GM12878 (cell line): ENCODE measurements at regions of chr1 and their contacts with region 1.

Region 1: DNA sequence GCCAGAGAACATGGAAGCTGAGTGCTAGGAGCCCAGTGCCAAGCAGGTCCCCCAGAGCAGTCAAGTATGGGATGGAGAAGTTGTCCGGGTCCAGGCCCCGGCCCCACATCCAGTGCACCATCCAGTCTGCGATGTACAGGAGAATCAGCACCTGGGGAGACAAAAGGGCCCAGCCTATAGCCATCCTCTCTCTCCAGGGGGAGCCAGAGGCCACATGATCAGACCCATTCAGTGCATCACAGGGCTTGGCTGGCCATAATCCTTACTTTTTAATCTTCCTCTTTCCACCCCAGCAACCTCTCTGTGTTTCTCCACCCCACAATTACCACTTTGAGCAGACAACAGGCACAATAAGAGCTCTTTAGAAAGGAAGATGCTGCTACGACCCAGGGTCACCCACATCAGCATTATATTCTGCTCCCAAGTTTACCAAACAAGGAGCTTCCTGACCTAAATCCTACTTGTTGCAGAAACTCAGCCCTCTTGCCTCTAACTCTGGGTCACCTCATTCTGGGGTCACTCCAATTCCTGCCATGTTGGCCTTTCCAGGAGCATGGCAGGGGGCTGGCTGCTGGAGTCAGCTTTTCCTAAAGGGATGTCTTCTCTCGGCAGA is 16.4 kb upstream of the RAB29 start:
- DNase-seq: no peak
- ATAC-seq: peak; percentile 98
- H3K4me3 ChIP-seq: no peak overlapping the region
- H3K27ac ChIP-seq: no peak overlapping the region
- H3K4me1 ChIP-seq: peaks cover 7% of the 10 kb centered on the region
- H3K27me3 ChIP-seq: no peaks in the 10 kb centered on the region; a peak in 1 of 4 replicates
- CTCF ChIP-seq: peak; percentile 87 to 94 (median 91); a peak in 5 of 6 replicates
- EP300 ChIP-seq: no peak
- POLR2A ChIP-seq: no peak
- RAD21 ChIP-seq: peak; percentile 78

Region 2: DNA sequence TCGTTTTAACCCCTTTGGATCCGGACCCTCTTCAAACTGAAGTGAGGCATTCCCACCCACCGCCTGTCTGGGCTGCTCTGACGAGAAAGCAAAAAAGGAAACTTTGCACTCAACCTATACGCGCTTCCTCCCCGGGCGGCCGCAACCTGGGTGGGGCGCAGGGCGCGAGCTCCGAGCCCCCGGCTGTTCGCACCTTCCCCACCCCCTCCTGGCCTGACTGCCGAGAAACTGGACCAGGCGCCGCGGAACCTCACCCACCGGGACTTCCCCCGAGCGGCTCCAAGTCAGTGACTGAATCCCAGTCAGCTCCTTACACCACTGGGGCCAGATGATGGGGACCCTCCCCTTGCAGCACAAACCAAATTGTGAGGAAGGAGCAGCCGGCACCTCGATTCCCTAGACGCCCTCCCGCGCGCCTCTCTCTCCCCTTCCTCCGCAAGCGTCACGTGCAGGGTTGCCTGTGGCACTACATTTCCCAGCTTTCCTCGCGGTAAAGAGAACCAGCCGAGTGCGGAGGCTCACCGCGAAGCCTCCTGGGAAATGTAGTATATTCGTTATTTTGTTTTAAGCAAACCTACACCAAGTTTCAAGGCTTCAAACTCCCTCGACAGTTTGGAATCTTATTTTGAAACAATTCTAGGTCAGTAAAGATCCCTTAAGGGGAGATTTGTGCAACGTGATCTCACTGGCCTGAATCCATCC is 16.5 kb before region 1 on chr1 and contains the start of gene RAB29:
- CTCF ChIA-PET with region 1: interaction called, 12 read pairs
- POLR2A ChIA-PET with region 1: interaction called, 4 read pairs
- RAD21 ChIA-PET with region 1: interaction called, 3 read pairs
- SMC1A ChIA-PET with region 1: interaction called, 3 read pairs
- in situ Hi-C with region 1: no loop called
- intact Hi-C with region 1: no loop called
- DNase-seq: peak; percentile 57
- ATAC-seq: peak; percentile 83
- H3K4me3 ChIP-seq: peak within 1 kb of the TSS; percentile 88
- H3K27ac ChIP-seq: peak within 1 kb of the TSS; percentile 63
- H3K4me1 ChIP-seq: peaks cover 12% of the 10 kb centered on the region
- H3K27me3 ChIP-seq: no peaks in the 10 kb centered on the region
- CTCF ChIP-seq: no peak
- EP300 ChIP-seq: peak in 1 of 2 experiments; percentile 46; a peak in 1 of 4 replicates
- POLR2A ChIP-seq: peak; percentile 50; the same call in 1 of the 2 replicates
- RAD21 ChIP-seq: no peak
- polyA plus RNA-seq, gene RAB29: 12.6 to 16.2 TPM

Region 3: DNA sequence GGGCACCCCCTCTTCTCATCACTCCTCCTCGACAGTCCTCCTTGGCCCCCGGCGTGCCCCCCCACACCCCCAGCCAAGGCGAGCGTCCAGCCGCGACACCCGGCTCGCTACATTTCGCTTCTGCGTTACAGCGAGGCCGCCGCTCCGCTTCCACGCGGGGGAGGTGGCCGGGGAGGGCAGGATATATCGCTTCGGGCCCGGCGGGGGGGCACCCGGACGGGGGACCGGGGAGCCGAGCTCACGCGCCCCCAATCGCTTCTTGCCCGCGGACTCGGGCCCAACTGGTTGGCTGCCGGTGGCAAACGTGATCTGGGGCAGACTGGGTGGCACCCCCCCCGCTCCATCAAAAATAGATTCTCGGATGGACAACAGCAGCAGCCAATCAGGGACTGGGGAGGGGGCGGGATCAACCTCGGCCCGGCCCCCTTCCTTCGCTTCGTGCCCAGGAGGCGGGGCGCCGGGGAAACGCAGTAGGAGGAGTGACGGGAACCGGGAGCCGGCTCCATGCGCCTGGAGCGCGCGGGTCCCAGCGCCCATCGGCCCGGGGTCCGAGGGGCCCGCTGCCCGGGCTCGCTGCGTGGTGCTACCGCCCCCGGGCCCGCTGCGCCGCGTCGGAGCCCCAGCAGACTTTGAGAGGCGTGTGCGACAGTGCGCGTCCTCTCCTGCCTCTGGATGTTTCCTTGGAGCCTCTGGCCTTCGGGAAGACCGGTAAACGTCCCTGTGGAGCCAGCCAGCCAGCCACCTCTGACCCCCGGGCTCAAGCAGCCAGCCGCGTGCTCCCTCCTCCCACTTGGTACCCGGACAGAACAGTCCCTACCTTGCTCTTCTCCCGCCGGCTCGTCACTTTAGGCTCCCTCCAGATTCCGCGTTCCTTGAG is 21.4 kb after region 1 on chr1 and contains the start of gene SLC41A1:
- CTCF ChIA-PET with region 1: interaction called, 13 read pairs
- POLR2A ChIA-PET with region 1: no interaction called
- RAD21 ChIA-PET with region 1: interaction called, 3 read pairs
- SMC1A ChIA-PET with region 1: interaction called, 7 read pairs
- in situ Hi-C with region 1: no loop called
- intact Hi-C with region 1: no loop called
- DNase-seq: peak; percentile 63
- ATAC-seq: peak; percentile 96
- H3K4me3 ChIP-seq: peak within 1 kb of the TSS; percentile 63
- H3K27ac ChIP-seq: no peak within 1 kb of the TSS
- H3K4me1 ChIP-seq: peaks cover 6% of the 10 kb centered on the region
- H3K27me3 ChIP-seq: peaks cover 2 to 10% of the 10 kb centered on the region in 2 experiments; a peak in 2 of 4 replicates
- CTCF ChIP-seq: no peak
- EP300 ChIP-seq: no peak
- POLR2A ChIP-seq: peak; percentile 46; the same call in 1 of the 2 replicates
- RAD21 ChIP-seq: no peak
- polyA plus RNA-seq, gene SLC41A1: 0.13 to 0.15 TPM

Region 4: DNA sequence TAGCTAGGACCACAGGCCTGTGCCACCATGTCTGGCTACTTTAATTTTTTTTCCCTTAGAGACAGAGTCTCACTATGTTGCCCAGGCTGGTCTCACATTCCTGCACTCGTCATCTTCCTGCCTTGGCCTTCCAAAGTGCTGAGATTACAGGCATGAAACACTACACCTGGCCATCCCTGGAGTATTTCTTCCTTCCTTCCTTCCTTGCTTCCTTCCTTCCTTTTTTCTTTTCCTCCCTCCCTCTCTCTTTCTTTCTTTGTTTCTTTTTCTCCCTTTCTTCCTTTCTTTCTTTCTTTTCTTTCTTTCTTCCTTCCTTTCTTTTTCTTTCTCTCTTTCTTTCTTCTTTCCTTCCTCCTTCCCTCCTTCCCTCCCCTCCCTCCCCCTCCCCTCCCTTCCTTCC is 104.6 kb after region 1 on chr1:
- CTCF ChIA-PET with region 1: no interaction called
- POLR2A ChIA-PET with region 1: no interaction called
- RAD21 ChIA-PET with region 1: no interaction called
- SMC1A ChIA-PET with region 1: no interaction called
- in situ Hi-C with region 1: no loop called
- intact Hi-C with region 1: no loop called
- DNase-seq: no peak
- ATAC-seq: no peak
- H3K4me3 ChIP-seq: no peak overlapping the region
- H3K27ac ChIP-seq: no peak overlapping the region
- H3K4me1 ChIP-seq: no peaks in the 10 kb centered on the region
- H3K27me3 ChIP-seq: no peaks in the 10 kb centered on the region
- CTCF ChIP-seq: no peak
- EP300 ChIP-seq: no peak
- POLR2A ChIP-seq: no peak
- RAD21 ChIP-seq: no peak

Region 5: GRCh38 chr1:205907794-205908193 is 116.1 kb after region 1 on chr1:
- CTCF ChIA-PET with region 1: interaction called, 29 read pairs
- POLR2A ChIA-PET with region 1: no interaction called
- RAD21 ChIA-PET with region 1: interaction called, 12 read pairs
- SMC1A ChIA-PET with region 1: interaction called, 30 read pairs
- in situ Hi-C with region 1: loop called (anchors 5 kb)
- intact Hi-C with region 1: loop called (anchors 2 kb)
- DNase-seq: no peak
- ATAC-seq: no peak
- H3K4me3 ChIP-seq: no peak overlapping the region
- H3K27ac ChIP-seq: no peak overlapping the region
- H3K4me1 ChIP-seq: no peaks in the 10 kb centered on the region
- H3K27me3 ChIP-seq: no peaks in the 10 kb centered on the region
- CTCF ChIP-seq: peak; percentile 31 to 60 (median 39); a peak in 5 of 6 replicates
- EP300 ChIP-seq: no peak
- POLR2A ChIP-seq: no peak
- RAD21 ChIP-seq: peak; percentile 20; the same call in 1 of the 2 replicates

Region 6: DNA sequence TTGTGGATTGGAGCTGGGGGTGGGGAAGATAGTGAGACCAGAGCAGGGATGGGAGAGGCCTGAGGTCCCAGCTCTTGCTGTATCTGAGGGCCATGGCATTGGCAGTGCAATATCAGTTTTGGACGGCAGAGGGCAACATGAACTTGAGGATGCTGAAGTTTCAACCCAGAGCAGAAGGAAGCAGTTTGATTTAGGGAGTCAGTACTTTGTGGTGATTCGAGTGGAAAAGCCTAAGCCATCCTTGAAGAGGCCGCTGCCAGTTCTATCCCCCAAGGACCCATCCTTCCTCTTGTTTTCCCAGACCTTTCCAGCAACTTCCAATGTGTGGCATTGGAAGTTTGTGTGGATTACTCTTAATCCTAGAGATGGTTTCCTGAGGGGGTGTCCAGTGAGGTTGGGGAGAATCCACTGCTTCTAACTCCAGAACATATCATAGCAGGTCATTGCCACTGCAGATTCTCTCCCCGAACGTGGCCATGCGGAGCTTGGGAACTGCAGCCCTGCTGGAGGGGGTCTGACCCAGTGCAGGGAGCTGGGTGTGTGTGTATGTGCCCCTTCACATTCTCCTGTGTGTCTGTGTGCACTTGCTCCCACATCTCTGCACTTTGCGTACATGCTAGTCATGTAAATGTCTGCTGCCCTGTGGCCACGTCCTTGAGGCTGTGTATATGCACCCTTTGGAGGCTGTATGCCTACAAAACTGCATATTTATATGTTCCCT is 127.5 kb after region 1 on chr1:
- CTCF ChIA-PET with region 1: interaction called, 53 read pairs
- POLR2A ChIA-PET with region 1: no interaction called
- RAD21 ChIA-PET with region 1: interaction called, 31 read pairs
- SMC1A ChIA-PET with region 1: interaction called, 46 read pairs
- in situ Hi-C with region 1: loop called (anchors 5 kb)
- intact Hi-C with region 1: loop called (anchors 2 kb)
- DNase-seq: peak; percentile 24
- ATAC-seq: peak; percentile 94
- H3K4me3 ChIP-seq: no peak overlapping the region
- H3K27ac ChIP-seq: no peak overlapping the region
- H3K4me1 ChIP-seq: no peaks in the 10 kb centered on the region; the same call in 1 of the 2 replicates
- H3K27me3 ChIP-seq: peaks cover 2 to 4% of the 10 kb centered on the region in 2 experiments; a peak in 2 of 4 replicates
- CTCF ChIP-seq: peak; percentile 90 to 93 (median 93)
- EP300 ChIP-seq: no peak
- POLR2A ChIP-seq: no peak
- RAD21 ChIP-seq: peak; percentile 91

Region 7: DNA sequence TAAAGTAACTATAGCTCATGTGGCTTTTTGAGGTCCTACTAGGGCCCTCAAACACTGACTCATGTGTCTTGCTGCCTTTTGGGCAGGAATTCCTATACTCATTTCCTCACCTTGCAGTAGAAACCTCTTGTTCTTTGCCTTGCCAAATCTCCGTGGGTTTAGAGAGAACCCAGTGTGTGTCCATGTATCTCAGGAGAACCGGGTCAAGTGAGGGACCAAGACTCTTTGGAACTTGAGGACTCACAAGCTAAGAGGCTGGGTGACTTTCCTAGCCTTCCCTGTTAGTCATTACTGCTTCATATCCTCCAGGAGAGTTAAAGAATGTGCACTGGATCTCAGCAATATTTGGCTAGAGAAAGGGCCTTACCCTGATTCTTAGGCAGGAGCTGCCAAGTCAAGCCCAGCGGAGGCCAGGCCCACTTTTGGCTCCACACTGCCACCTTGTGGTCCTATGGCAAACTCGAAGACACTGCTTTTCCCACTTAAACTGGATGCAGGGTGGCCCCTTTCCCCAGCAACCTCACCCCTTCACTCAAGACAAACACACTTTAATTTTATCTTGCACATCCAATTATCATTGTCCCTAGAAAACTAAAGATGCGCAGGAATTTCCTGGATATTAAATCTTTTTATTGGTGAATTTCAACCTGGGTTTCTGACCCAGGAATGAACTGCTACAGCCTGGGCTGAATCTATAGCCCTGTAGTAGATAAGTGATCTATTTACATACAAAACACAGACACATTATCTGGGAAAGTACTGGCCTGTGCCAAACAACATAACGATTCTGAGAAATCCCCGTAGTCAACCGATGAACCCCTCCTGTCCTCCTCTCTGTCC is 314.9 kb after region 1 on chr1:
- CTCF ChIA-PET with region 1: interaction called, 13 read pairs
- POLR2A ChIA-PET with region 1: no interaction called
- RAD21 ChIA-PET with region 1: interaction called, 9 read pairs
- SMC1A ChIA-PET with region 1: interaction called, 3 read pairs
- in situ Hi-C with region 1: loop called (anchors 5 kb)
- intact Hi-C with region 1: loop called (anchors 2 kb)
- DNase-seq: peak; percentile 39
- ATAC-seq: peak; percentile 98
- H3K4me3 ChIP-seq: no peak overlapping the region
- H3K27ac ChIP-seq: no peak overlapping the region
- H3K4me1 ChIP-seq: no peaks in the 10 kb centered on the region
- H3K27me3 ChIP-seq: peaks cover 0 to 2% of the 10 kb centered on the region in 2 experiments; a peak in 2 of 4 replicates
- CTCF ChIP-seq: peak; percentile 83 to 96 (median 87)
- EP300 ChIP-seq: no peak
- POLR2A ChIP-seq: no peak
- RAD21 ChIP-seq: peak; percentile 98